Right ventricle myocardium inferior (tissue), 1 donor: ENCODE measurements at regions of chr1 and their contacts with region 1.

Region 1: GRCh38 chr1:246647113-246647512 is 77.1 kb upstream of the SCCPDH start:
- DNase-seq: peak; percentile 79
- ATAC-seq: peak; percentile 97

Region 2: DNA sequence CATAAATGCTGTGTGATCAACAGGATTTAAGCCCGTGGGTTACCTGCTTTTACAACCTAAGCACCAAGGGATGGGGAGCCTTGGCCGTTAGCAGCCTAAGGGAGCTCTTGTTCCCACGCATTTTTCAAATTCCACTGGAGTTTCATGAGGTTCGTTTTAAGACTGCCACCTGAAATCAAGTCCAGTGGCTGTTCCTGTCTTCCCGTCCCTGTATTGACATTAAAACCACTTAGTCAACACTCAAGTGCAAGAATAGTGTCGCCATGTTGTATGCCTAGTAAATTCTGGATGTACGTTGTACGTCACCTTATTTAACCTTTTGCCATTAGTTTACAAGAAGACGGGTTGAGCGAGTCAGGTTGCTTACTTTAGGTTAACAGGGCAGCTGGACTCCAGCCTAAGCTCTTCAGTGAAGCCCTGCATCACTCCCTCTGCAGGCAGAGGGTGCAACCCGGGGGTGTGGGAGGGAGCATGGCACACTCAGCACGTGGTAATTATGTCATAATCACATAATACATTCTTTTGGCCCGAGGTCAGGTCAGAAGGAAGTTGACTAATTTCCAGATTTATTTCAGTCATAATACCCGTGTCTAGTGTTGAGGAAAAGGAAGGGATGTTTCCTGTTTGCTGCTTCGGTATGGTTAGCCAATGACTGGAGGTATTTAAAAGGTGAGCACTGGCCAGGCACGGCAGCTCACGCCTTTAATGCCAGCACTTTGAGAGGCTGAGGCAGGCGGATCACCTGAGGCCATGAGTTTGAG is 38.3 kb before region 1 on chr1:
- intact Hi-C with region 1: no loop called
- DNase-seq: no peak
- ATAC-seq: peak; percentile 87

Region 3: GRCh38 chr1:246681900-246682299 is 34.8 kb after region 1 on chr1:
- intact Hi-C with region 1: loop called (anchors 5 kb)
- DNase-seq: no peak
- ATAC-seq: peak; percentile 83

Region 4: DNA sequence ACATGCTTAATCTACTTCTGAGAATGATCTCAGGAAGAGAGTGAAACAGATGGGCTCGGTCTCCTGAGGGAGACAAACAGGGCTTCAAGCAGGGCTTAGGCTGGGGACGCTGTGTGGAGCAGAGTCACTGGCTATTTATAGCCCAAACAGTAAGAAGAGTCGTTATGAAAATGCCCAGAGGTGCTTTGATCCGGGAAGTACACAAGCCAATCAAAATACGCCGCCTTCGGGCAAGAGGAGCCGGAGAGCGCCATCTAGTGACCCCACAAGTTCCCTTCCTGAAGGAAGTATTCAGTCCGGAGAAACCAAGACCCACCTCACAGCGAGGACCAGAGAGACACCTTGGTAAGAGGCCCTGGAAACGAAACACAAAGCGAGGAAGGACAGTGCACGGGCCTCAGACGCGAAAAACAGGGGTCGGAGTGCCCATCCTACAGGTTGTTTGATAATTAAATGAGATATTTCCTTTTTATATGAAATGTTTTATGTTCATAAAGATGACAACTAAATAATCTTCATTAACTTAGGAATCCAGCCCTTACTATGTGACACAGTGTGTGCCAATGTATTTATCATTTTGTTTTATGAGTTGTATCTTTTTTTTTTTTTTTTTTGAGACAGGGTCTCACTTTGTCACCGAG is 52.1 kb after region 1 on chr1:
- intact Hi-C with region 1: loop called (anchors 2 kb)
- DNase-seq: peak; percentile 88
- ATAC-seq: peak; percentile 94

Region 5: GRCh38 chr1:246742396-246742795 is 95.3 kb after region 1 on chr1:
- intact Hi-C with region 1: no loop called
- DNase-seq: no peak
- ATAC-seq: no peak